ENCODE measurements at regions of chr5 and their contacts with region 1.

Region 1: DNA sequence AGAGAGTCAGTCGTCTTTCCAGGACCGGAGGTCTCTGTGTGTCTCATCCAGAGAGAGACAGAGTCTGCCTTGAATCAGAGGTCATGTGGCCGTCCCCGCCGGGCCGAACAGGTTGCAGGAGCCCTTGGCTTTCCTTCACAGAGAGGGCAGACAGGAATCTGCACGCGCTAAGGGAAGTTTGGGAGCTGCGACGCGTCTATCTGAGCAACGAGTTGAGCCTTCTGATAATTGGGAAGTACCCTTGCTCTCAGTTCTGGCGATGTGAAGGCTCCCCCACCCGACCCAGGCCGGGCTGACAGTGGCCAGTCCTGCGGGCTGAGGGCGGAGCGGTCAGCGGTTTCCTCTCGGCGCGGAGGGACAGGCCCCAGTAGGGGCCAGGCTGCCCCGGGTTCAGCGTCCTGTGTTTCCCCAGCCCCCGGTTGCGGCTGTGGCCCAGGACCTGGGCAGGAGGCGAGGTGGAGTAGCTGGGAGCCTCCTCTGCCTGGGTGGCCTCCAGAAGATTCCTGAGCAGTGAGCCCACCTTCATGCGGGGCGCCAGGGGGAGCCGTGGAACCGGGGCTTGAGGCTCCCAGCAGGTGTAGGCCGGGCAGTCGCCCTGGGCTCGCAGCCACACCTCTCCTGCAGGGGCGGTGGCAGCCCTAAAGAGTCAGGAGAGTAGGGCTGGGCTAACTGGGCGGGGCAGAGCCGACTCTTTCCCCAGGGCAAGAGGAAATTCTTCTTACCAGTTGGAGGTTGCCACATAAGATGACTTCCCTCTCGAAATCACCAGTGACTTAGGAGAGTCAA is 13.8 kb downstream of the NR2F1 start:
- DNase-seq: no peak

Region 2: DNA sequence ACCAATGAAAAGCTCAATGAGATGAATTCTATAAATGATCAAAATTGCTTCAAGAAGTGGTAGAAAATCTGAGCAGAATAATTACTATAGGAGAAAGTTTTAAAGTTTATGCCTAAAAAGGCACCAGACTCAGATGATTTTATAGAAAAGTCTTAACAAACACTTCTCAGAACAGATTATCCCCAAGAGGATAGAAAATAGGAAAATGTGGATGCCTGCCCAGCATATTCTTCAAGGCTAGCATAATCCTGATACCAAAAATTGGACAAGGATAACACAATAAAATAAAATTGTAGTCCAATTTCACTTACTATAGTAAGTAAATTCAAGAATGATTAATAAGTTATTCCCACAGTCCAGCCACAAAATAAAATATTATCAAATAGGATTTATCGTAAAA is 412.8 kb before region 1 on chr5:
- intact Hi-C with region 1: no loop called
- DNase-seq: no peak

Region 3: GRCh38 chr5:93800988-93801811 is 204.3 kb after region 1 on chr5:
- intact Hi-C with region 1: loop called in 1 of 2 experiments (anchors 10 kb)
- DNase-seq: no peak